Mammary epithelial cell (primary cell): ENCODE measurements at regions of chr2 and their contacts with region 1.

Region 1: DNA sequence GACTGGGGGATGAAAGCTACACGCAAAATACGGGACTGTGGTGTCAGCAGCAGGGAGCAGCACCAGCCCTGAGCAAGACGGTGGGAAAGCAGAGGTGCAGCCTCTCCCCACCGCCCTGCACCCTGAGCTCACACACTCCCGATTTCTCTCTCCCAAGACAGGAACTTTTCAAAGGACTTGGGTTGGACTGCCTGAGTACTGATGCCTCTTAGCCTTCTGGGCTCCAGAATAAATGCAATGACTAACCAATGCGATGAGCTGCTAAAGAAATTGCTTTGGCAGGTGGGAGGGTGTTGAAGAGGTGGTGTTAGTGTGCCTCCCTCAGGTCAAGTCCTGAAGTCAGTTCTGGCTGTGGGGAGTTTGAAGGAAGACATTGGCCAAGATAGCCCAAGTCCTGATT is 9.6 kb downstream of the TRIM54 start:
- DNase-seq: peak; percentile 10
- H3K4me3 ChIP-seq: no peak overlapping the region
- H3K27ac ChIP-seq: no peak overlapping the region
- H3K4me1 ChIP-seq: peaks cover 13% of the 10 kb centered on the region
- H3K27me3 ChIP-seq: no peaks in the 10 kb centered on the region
- CTCF ChIP-seq: no peak

Region 2: GRCh38 chr2:27264753-27265535 is 26.9 kb before region 1 on chr2:
- CTCF ChIA-PET with region 1: interaction called, 3 read pairs
- dilution Hi-C with region 1: no loop called
- in situ Hi-C with region 1: no loop called
- intact Hi-C with region 1: loop called (anchors 5 kb)
- DNase-seq: peak; percentile 39
- H3K4me3 ChIP-seq: no peak overlapping the region
- H3K27ac ChIP-seq: no peak overlapping the region
- H3K4me1 ChIP-seq: peaks cover 19% of the 10 kb centered on the region
- H3K27me3 ChIP-seq: peaks cover 48% of the 10 kb centered on the region
- CTCF ChIP-seq: peak; percentile 14 to 45

Region 3: GRCh38 chr2:27723372-27724144 is 431.7 kb after region 1 on chr2:
- CTCF ChIA-PET with region 1: no interaction called
- dilution Hi-C with region 1: no loop called
- in situ Hi-C with region 1: no loop called
- intact Hi-C with region 1: no loop called
- DNase-seq: peak; percentile 53
- H3K4me3 ChIP-seq: no peak overlapping the region
- H3K27ac ChIP-seq: no peak overlapping the region
- H3K4me1 ChIP-seq: peaks cover 32% of the 10 kb centered on the region
- H3K27me3 ChIP-seq: no peaks in the 10 kb centered on the region
- CTCF ChIP-seq: peak; percentile 78 to 89